ENCODE measurements at regions of chr6 and their contacts with region 1.

Region 1: GRCh38 chr6:169751242-169752073 is at the starts of genes DYNLT2 and ERMARD:
- DNase-seq: peak; percentile 92 to 96 (median 94)
- ATAC-seq: peak; percentile 97 to 100 (median 99)
- H3K4me3 ChIP-seq: peak within 1 kb of the TSS; percentile 66 to 98 (median 88)
- H3K27ac ChIP-seq: peak within 1 kb of the TSS; percentile 85 to 97 (median 96)
- H3K4me1 ChIP-seq: peaks cover 0 to 29% (median 17%) of the 10 kb centered on the region in 12 donors
- H3K27me3 ChIP-seq: no peaks in the 10 kb centered on the region
- CTCF ChIP-seq: peak in 10 of 12 donors; percentile 14 to 37 (median 24)
- POLR2A ChIP-seq: peak in 1 of 2 donors; percentile 81
- total RNA-seq, gene DYNLT2: 0.49 to 1.2 (median 0.62) TPM
- total RNA-seq, gene ERMARD: 6.4 to 15.5 (median 8.8) TPM

Region 2: DNA sequence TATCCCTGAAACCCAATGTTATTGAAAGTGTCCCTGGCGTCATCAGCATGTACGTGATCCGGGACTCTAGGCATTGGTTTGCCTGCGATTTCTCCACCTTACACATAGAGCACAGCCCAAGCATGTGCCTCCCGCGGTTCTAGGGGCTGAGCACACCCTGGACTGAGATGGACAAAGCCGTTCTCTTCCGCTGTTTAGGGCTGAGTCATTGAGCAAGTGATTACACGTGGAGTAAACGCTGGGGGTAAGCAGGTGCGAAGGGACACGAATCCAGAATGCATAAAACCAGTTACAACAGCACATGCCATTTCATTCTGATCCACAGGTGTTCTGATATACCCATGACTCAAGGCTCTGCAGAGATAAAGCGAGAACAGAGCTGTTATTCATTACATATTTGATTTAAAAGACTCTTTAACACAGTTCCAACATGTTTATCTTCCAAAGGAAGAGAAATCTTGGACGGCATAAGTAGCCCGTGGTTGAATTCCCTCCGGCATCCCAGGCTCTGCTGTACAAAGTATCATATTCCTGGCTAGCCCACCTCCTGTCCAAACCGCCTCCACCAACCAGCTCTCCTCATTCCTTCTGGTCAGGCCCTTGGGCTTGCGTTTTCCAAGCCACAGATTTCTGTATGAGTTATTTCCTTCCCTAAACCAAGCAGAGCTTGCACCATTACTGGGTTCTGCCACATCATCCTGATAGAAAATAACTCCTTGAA is 461.7 kb before region 1 on chr6:
- intact Hi-C with region 1: no loop called
- DNase-seq: peak in 4 of 5 donors; percentile 60 to 69 (median 68)
- ATAC-seq: peak; percentile 80 to 89 (median 85)
- H3K4me3 ChIP-seq: no peak overlapping the region
- H3K27ac ChIP-seq: peak overlapping the region; percentile 11 to 87 (median 66)
- H3K4me1 ChIP-seq: peaks cover 0 to 39% (median 0%) of the 10 kb centered on the region in 12 donors
- H3K27me3 ChIP-seq: no peaks in the 10 kb centered on the region
- CTCF ChIP-seq: no peak
- POLR2A ChIP-seq: no peak

Region 3: DNA sequence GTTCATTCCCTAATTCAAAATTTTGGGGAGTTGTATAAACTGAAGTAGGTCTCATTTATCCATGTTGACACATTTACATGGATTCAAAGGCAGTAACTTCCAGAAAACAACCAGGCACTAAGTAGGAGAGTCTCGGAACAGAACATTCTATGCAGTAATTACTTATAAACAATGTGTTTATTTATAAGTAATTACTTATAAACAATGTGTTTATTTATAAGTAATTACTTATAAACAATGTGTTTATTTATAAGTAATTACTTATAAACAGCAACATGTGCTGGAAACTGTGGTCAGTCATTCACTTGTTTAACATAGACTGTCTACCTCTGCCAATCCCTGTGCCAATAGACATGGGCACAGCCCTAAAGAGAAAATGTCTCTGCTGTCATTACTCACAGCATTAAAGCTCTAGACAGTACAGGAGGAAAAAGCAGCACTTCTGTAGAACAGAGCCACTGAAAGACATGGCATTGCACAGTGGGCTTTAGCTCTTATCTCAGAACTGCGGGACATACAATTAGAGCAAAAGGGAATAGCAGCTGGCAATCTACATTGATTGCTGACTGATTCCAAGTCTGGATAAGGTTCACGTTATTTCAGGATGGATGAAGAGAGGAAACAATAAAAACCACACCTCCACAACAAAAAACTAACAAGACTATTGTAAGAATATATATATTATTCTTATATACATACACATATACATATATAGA is 237.8 kb before region 1 on chr6:
- intact Hi-C with region 1: no loop called
- DNase-seq: no peak
- ATAC-seq: no peak
- H3K4me3 ChIP-seq: no peak overlapping the region
- H3K27ac ChIP-seq: no peak overlapping the region
- H3K4me1 ChIP-seq: no peaks in the 10 kb centered on the region
- H3K27me3 ChIP-seq: no peaks in the 10 kb centered on the region
- CTCF ChIP-seq: no peak
- POLR2A ChIP-seq: no peak

Region 4: GRCh38 chr6:169701954-169702839 is 49.3 kb before region 1 on chr6 and contains the starts of genes C6orf120 and WDR27:
- intact Hi-C with region 1: loop called in 3 of 10 experiments (anchors 1 to 10 kb)
- DNase-seq: peak; percentile 96 to 99 (median 97)
- ATAC-seq: peak; percentile 96 to 99 (median 98)
- H3K4me3 ChIP-seq: peak within 1 kb of the TSS; percentile 72 to 99 (median 88)
- H3K27ac ChIP-seq: peak within 1 kb of the TSS; percentile 81 to 97 (median 94)
- H3K4me1 ChIP-seq: peaks cover 0 to 56% (median 30%) of the 10 kb centered on the region in 12 donors
- H3K27me3 ChIP-seq: no peaks in the 10 kb centered on the region
- CTCF ChIP-seq: peak in 2 of 12 donors; percentile 7 to 27
- POLR2A ChIP-seq: peak; percentile 46 to 91
- total RNA-seq, gene C6orf120: 14.3 to 22.9 (median 18.8) TPM
- total RNA-seq, gene WDR27: 2.2 to 12.3 (median 6.6) TPM

Region 5: DNA sequence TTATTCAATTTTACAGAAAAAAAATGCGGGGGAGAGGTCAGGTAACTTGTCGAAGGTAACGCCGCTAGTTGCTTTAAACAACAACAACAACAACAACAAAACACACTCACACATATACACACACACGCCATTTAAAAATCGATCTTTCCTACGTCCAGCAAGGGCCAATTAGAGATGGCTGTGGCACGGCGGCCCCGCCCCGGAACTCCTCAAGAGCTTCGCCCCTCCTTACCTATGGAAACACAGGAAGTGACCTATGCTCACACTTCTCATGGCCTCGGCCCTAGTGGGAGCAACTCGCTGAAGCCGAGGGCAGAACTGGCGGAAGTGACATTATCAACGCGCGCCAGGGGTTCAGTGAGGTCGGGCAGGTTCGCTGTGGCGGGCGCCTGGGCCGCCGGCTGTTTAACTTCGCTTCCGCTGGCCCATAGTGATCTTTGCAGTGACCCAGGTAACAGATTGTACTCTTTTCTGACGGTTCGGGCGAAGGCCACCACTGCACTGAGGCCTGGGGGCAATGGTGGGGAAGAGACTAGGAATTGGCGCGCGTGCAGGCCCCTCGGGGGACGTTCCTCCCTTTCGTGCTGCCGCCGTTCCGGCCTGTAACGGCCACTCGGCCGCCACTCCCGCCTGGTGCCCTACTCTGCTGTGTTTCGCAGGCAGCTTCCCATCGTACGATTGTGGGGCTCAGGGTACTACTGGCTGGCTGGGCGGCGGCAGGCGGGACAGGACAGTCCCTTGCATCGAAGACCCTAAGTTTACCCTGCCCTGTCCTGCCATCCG is 802.7 kb after region 1 on chr6 and contains the start of gene TBP:
- intact Hi-C with region 1: loop called in 9 of 10 experiments (anchors 1 to 5 kb)
- DNase-seq: peak; percentile 97 to 99 (median 98)
- ATAC-seq: peak; percentile 97 to 98 (median 97)
- H3K4me3 ChIP-seq: peak within 1 kb of the TSS; percentile 66 to 98 (median 80)
- H3K27ac ChIP-seq: peak within 1 kb of the TSS; percentile 84 to 98 (median 94)
- H3K4me1 ChIP-seq: peaks cover 14 to 54% (median 47%) of the 10 kb centered on the region in 12 donors
- H3K27me3 ChIP-seq: no peaks in the 10 kb centered on the region
- CTCF ChIP-seq: peak in 1 of 12 donors; percentile 12
- POLR2A ChIP-seq: peak in 1 of 2 donors; percentile 41
- total RNA-seq, gene TBP: 6.5 to 19.1 (median 8.9) TPM